Endothelial cell of umbilical vein (primary cell): ENCODE measurements at regions of chr21 and their contacts with region 1.

Region 1: GRCh38 chr21:32475164-32475812 is 62.8 kb downstream of the EVA1C start:
- DNase-seq: peak; percentile 86
- H3K4me3 ChIP-seq: peak overlapping the region in 1 of 3 experiments; percentile 36
- H3K27ac ChIP-seq: peak overlapping the region; percentile 66
- H3K4me1 ChIP-seq: peaks cover 46% of the 10 kb centered on the region
- H3K27me3 ChIP-seq: no peaks in the 10 kb centered on the region
- CTCF ChIP-seq: no peak
- POLR2A ChIP-seq: no peak

Region 2: GRCh38 chr21:30900881-30901280 is 1574.4 kb before region 1 on chr21:
- CTCF ChIA-PET with region 1: no interaction called
- POLR2A ChIA-PET with region 1: no interaction called
- dilution Hi-C with region 1: no loop called
- intact Hi-C with region 1: loop called (anchors 10 kb)
- DNase-seq: no peak
- H3K4me3 ChIP-seq: no peak overlapping the region
- H3K27ac ChIP-seq: no peak overlapping the region
- H3K4me1 ChIP-seq: no peaks in the 10 kb centered on the region
- H3K27me3 ChIP-seq: no peaks in the 10 kb centered on the region
- CTCF ChIP-seq: no peak
- POLR2A ChIP-seq: no peak

Region 3: DNA sequence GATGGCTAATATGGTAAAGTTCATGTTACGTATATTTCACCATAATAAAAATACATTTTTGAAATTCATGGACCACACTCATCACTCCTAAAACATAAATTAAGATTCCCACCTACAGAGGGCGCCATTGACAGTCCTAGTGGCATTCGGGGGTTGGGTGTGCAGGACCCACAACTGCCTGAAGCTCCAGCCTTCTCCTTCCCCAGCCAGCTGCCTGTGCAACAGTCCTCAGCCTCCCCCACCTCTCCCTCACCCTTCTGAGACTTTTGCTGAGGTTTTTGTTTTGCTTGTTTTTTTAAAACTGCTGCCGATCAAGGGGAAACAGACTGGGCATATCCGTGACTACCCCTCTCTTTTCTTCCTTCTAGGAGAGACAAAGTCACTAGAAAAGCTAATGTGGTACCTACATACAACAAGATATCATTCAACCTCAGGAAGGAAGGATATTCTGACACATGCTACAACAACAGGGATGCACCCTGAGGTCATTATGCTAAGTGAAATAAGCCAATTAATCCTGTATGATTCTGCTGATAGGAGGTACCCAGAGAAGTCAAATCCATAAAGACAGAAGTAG is 72.0 kb before region 1 on chr21:
- CTCF ChIA-PET with region 1: interaction called, 12 read pairs
- POLR2A ChIA-PET with region 1: no interaction called
- dilution Hi-C with region 1: no loop called
- intact Hi-C with region 1: no loop called
- DNase-seq: peak; percentile 86
- H3K4me3 ChIP-seq: no peak overlapping the region
- H3K27ac ChIP-seq: peak overlapping the region; percentile 22
- H3K4me1 ChIP-seq: peaks cover 16% of the 10 kb centered on the region
- H3K27me3 ChIP-seq: no peaks in the 10 kb centered on the region
- CTCF ChIP-seq: peak; percentile 63 to 66
- POLR2A ChIP-seq: no peak

Region 4: GRCh38 chr21:32463889-32464300 is 11.4 kb before region 1 on chr21:
- CTCF ChIA-PET with region 1: interaction called, 14 read pairs
- POLR2A ChIA-PET with region 1: interaction called, 4 read pairs
- dilution Hi-C with region 1: no loop called
- intact Hi-C with region 1: loop called (anchors 1 kb)
- DNase-seq: peak; percentile 95
- H3K4me3 ChIP-seq: no peak overlapping the region
- H3K27ac ChIP-seq: peak overlapping the region; percentile 99
- H3K4me1 ChIP-seq: peaks cover 28% of the 10 kb centered on the region
- H3K27me3 ChIP-seq: no peaks in the 10 kb centered on the region
- CTCF ChIP-seq: no peak
- POLR2A ChIP-seq: peak; percentile 26

Region 5: DNA sequence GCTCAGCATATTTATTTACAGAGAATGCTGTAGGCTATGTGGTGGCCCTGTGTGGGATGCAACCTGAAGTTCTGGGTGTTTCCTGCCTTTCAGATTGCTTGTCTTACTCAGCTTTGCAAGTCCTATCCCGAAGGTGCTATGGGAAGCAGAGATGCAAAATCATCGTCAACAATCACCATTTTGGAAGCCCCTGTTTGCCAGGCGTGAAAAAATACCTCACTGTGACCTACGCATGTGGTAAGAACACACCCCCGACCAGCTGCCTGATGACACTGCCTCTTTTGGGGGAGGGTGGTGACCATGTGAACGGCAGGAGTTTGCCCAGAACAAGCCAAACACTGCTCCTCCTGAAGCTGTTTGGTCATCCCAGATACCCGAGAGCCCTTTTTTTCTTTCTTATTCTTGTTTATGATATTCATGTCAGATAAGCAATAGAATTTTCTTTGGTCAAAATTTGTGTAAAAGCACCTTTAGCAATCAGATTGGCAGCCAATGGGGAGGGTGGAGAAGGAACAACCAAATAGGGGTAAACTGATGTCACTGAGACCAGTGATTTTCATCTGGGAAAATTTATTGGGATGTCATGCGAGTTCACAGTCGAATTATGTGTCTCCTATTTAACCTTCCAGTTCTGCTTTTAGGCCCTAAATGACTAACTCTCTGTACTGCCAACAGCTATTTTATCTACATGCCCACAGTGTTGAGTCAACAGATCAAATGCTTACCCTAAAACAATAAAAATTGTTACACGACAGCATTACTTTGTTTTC is 19.8 kb after region 1 on chr21:
- CTCF ChIA-PET with region 1: interaction called, 5 read pairs
- POLR2A ChIA-PET with region 1: interaction called, 3 read pairs
- dilution Hi-C with region 1: no loop called
- intact Hi-C with region 1: loop called (anchors 1 kb)
- DNase-seq: peak; percentile 91
- H3K4me3 ChIP-seq: no peak overlapping the region
- H3K27ac ChIP-seq: peak overlapping the region; percentile 95
- H3K4me1 ChIP-seq: peaks cover 73% of the 10 kb centered on the region
- H3K27me3 ChIP-seq: no peaks in the 10 kb centered on the region
- CTCF ChIP-seq: no peak
- POLR2A ChIP-seq: peak; percentile 20

Region 6: GRCh38 chr21:32562426-32562825 is 87.1 kb after region 1 on chr21:
- CTCF ChIA-PET with region 1: interaction called, 12 read pairs
- POLR2A ChIA-PET with region 1: interaction called, 4 read pairs
- dilution Hi-C with region 1: no loop called
- intact Hi-C with region 1: loop called (anchors 1 kb)
- DNase-seq: peak; percentile 84
- H3K4me3 ChIP-seq: no peak overlapping the region
- H3K27ac ChIP-seq: peak overlapping the region; percentile 22
- H3K4me1 ChIP-seq: peaks cover 6% of the 10 kb centered on the region
- H3K27me3 ChIP-seq: no peaks in the 10 kb centered on the region
- CTCF ChIP-seq: peak; percentile 48 to 61
- POLR2A ChIP-seq: no peak